ENCODE measurements at regions of chr9 and their contacts with region 1.

Region 1: DNA sequence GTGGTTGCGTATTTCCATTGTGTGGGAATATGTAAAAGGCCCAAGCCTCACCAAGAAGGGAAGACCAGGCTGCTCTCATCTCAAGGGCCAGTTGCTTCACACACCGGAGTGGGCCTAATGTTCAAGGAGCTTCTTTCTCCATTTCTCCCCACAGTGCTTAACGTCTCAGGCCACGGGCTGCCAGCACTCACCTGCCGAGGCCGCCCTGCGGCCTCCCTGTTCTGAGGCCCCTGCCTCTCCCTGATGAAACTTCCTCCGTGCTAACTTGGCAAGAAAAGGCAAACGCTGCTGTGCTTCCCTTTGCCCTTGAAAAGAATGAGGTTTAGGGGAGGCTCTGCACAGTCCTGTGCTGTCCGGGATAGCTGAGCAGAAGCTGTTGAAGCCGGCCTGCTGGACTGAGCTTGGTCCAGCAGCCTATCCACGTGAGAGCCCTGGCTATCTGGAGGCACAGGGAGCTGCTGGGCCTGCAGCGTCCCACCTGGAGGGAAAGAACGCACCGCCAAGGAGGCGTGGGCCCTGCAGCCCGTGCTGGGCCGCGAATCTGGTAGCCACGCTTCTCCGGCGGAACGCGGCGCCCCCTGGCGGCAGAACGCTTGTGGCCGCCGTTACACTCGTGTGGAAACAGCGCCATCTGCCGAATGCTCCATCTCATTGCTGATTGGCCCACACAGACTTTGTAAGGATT is 73.5 kb upstream of the PRSS3 start:
- DNase-seq: peak; percentile 81
- ATAC-seq: peak; percentile 85
- H3K4me3 ChIP-seq: no peak overlapping the region
- H3K27ac ChIP-seq: no peak overlapping the region
- H3K4me1 ChIP-seq: peaks cover 0 to 5% of the 10 kb centered on the region in 2 experiments; a peak in 2 of 4 replicates
- H3K27me3 ChIP-seq: 0 out of 2 replicates have a peak, but pooled peaks cover 3% of the 10 kb centered on the region
- CTCF ChIP-seq: peak; percentile 95 to 100 (median 98)
- POLR2A ChIP-seq: no peak
- RAD21 ChIP-seq: peak; percentile 100

Region 2: DNA sequence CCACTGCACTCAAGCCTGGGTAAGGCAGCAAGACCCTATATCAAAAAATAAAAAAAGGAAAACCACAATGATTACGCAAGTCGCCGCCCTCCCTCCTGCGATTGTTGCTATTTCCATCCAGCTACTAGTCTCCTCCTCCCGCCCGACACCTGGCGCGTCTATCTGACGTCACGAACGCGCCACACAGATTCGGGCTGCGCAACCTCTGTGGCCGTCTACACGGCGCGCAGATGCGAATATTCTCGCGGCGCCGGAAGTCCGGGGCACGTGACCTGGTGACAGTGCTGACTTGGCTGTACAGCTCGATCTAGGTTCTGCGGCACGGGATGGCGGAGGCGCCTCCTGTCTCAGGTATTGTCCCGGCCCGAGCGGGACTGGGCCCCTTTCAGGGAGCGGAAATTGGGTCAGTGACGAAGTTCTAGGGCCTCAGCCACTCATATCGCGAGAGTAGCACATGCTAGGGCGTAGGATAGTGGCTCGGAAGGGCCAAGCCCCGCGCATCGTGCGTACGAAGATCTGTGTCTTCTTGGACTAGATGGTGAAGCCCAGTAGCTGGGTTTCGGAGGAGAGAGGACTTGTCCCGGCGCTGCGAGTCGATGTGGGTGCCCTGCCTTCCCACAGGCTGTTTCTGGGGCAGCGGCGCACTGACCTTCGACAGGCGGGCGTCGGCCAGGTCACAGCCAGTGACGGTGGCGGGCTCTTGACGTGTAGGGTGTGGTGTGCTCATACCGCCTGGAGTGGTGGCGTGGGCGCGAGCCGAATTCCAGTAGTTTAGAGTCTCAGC is 431.4 kb before region 1 on chr9 and contains the start of gene NFX1:
- CTCF ChIA-PET with region 1: no interaction called
- POLR2A ChIA-PET with region 1: no interaction called
- RAD21 ChIA-PET with region 1: no interaction called
- intact Hi-C with region 1: loop called (anchors 5 kb)
- DNase-seq: peak; percentile 95
- ATAC-seq: peak; percentile 94
- H3K4me3 ChIP-seq: peak within 1 kb of the TSS; percentile 80 to 85
- H3K27ac ChIP-seq: peak within 1 kb of the TSS; percentile 83
- H3K4me1 ChIP-seq: peaks cover 5 to 22% of the 10 kb centered on the region in 2 experiments; a peak in 2 of 4 replicates
- H3K27me3 ChIP-seq: no peaks in the 10 kb centered on the region
- CTCF ChIP-seq: no peak
- POLR2A ChIP-seq: peak; percentile 68
- RAD21 ChIP-seq: no peak
- total RNA-seq, gene NFX1: 31.7 TPM

Region 3: GRCh38 chr9:33404788-33405362 is 316.9 kb before region 1 on chr9:
- CTCF ChIA-PET with region 1: no interaction called
- POLR2A ChIA-PET with region 1: no interaction called
- RAD21 ChIA-PET with region 1: no interaction called
- intact Hi-C with region 1: loop called (anchors 2 kb)
- DNase-seq: no peak
- ATAC-seq: 0 out of 2 replicates have a peak, but pooled peaks have one; percentile 14
- H3K4me3 ChIP-seq: no peak overlapping the region
- H3K27ac ChIP-seq: no peak overlapping the region
- H3K4me1 ChIP-seq: peaks cover 0 to 3% of the 10 kb centered on the region in 2 experiments; a peak in 1 of 4 replicates
- H3K27me3 ChIP-seq: no peaks in the 10 kb centered on the region
- CTCF ChIP-seq: no peak
- POLR2A ChIP-seq: no peak
- RAD21 ChIP-seq: no peak

Region 4: DNA sequence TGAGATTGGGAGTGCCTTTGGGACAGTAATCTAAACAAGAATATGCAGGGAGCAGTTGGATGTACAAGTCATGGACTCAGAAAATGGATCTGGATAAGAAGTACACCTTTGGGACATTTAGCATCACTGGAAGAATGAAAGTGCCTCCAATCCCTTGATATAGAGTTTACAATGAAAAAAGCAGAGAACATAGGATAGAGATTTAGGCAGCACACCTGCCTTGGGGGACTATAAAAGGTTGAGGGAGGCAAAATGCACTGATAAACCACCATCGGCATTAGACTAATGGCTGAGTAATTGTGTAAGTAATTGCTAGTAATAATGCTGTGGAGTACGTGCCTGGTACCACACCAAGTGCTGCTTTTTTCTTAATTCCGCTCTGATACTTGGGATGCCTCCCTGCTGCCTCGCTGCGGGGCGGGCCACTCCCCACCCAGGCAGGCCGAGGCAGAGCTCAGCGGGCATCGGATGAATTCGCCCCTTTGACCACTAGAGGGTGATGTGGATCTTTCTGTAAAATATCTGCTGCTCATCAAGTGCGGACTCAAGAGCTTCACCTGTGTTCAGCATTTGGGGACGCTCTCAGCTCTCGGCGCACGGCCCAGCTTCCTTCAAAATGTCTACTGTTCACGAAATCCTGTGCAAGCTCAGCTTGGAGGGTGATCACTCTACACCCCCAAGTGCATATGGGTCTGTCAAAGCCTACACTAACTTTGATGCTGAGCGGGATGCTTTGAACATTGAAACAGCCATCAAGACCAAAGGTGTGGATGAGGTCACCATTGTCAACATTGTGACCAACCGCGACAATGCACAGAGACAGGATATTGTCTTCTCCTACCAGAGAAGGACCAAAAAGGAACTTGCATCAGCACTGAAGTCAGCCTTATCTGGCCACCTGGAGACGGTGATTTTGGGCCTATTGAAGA is 97.9 kb before region 1 on chr9:
- CTCF ChIA-PET with region 1: interaction called, 190 read pairs
- POLR2A ChIA-PET with region 1: interaction called, 6 read pairs
- RAD21 ChIA-PET with region 1: interaction called, 25 to 27 read pairs
- intact Hi-C with region 1: loop called (anchors 1 kb)
- DNase-seq: peak; percentile 81
- ATAC-seq: peak; percentile 98
- H3K4me3 ChIP-seq: no peak overlapping the region
- H3K27ac ChIP-seq: no peak overlapping the region
- H3K4me1 ChIP-seq: peaks cover 3 to 25% of the 10 kb centered on the region in 2 experiments; a peak in 3 of 4 replicates
- H3K27me3 ChIP-seq: no peaks in the 10 kb centered on the region
- CTCF ChIP-seq: peak; percentile 77 to 98 (median 79)
- POLR2A ChIP-seq: no peak
- RAD21 ChIP-seq: peak; percentile 94